ENCODE measurements at regions of chr6 and their contacts with region 1.

Region 1: GRCh38 chr6:11632795-11633511 is 95.4 kb downstream of the TMEM170B start:
- DNase-seq: no peak
- H3K4me3 ChIP-seq: no peak overlapping the region
- H3K4me1 ChIP-seq: no peaks in the 10 kb centered on the region
- H3K27me3 ChIP-seq: no peaks in the 10 kb centered on the region

Region 2: DNA sequence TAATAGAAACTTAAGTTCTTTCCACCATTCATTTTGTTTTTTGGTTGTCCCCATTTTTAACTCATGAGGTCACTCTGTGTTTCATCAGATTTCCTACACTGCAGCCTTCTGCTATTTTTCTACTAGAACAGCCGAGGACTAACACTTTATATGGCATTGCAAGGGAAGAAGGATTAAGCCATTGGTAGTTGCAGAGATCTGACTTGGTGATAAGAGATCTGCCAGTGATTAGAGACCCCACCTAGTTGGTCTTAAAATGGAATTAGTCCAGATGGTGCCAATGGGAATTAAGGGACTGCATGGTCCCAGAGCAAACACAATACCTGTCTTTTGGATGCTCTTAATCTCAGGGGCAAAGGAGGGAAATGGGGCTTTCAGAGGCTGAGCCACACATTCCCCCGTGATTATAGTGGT is 220.9 kb before region 1 on chr6:
- in situ Hi-C with region 1: no loop called
- DNase-seq: peak; percentile 47 to 88
- H3K4me3 ChIP-seq: no peak overlapping the region
- H3K4me1 ChIP-seq: peaks cover 43% of the 10 kb centered on the region
- H3K27me3 ChIP-seq: no peaks in the 10 kb centered on the region

Region 3: GRCh38 chr6:12605888-12606345 is 973.0 kb after region 1 on chr6:
- in situ Hi-C with region 1: loop called (anchors 25 kb)
- DNase-seq: peak; percentile 38 to 58
- H3K4me3 ChIP-seq: no peak overlapping the region
- H3K4me1 ChIP-seq: no peaks in the 10 kb centered on the region
- H3K27me3 ChIP-seq: no peaks in the 10 kb centered on the region

Region 4: GRCh38 chr6:12890171-12890790 is 1257.3 kb after region 1 on chr6:
- in situ Hi-C with region 1: loop called (anchors 25 kb)
- DNase-seq: peak; percentile 13 to 66
- H3K4me3 ChIP-seq: no peak overlapping the region
- H3K4me1 ChIP-seq: no peaks in the 10 kb centered on the region
- H3K27me3 ChIP-seq: no peaks in the 10 kb centered on the region

Measured in HAP-1 (cell line).